ENCODE measurements at regions of chr11 and their contacts with region 1.

Region 1: DNA sequence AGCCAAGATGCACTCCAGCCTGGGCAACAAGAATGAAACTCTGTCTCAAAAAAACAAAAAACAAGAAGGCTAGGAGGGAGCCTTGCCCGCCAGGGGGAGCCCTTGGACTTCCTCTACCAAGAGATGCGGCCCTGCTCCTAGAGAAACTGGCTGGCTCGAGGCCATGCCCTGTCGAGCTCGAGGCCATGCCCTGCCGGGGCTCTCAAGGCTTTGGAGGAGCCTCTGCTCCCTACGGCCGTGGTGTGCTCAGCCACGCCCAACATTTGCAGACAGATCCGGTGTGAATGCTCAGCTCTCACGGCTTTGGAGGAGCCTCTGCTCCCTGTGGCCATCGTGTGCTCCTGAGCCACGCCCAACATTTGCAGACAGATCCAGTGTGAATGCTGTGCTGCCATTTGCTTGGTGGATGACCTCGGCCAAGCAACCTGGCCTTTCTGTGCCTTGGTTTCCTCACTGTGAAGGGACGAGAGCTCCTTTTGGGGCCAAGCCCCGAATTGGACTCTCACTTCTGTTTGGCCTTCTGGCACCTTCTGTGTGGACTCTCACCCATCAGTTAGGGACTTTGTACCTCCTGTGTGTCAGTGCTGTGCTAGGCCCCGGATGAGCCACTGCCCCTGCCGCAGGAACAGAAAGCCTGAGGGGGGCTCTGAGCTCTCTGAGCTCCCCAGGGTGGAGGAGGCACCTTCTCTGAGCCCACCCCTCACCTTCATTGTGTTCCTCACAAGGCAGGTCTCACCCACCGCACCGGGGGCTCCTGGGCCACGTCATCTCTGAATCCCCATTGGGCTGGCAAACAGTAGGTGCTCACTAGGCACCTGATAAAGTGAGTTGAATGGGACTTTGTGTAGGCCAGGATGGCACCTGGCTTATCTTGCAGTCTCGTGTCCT is 14.1 kb downstream of the C11orf24 start:
- DNase-seq: peak; percentile 97 to 99 (median 98)
- ATAC-seq: peak; percentile 85
- H3K4me3 ChIP-seq: no peak overlapping the region
- H3K27ac ChIP-seq: no peak overlapping the region
- H3K4me1 ChIP-seq: no peaks in the 10 kb centered on the region
- H3K27me3 ChIP-seq: no peaks in the 10 kb centered on the region

Region 2: GRCh38 chr11:68297812-68298658 is 40.3 kb after region 1 on chr11:
- intact Hi-C with region 1: loop called (anchors 2 to 5 kb)
- DNase-seq: peak; percentile 80 to 93 (median 92)
- ATAC-seq: peak; percentile 95 to 97
- H3K4me3 ChIP-seq: no peak overlapping the region
- H3K27ac ChIP-seq: no peak overlapping the region
- H3K4me1 ChIP-seq: no peaks in the 10 kb centered on the region
- H3K27me3 ChIP-seq: no peaks in the 10 kb centered on the region

Region 3: GRCh38 chr11:68383976-68384501 is 126.3 kb after region 1 on chr11:
- intact Hi-C with region 1: loop called in 3 of 4 experiments (anchors 5 kb)
- DNase-seq: peak; percentile 70 to 89 (median 88)
- ATAC-seq: no peak
- H3K4me3 ChIP-seq: no peak overlapping the region
- H3K27ac ChIP-seq: no peak overlapping the region
- H3K4me1 ChIP-seq: peaks cover 17% of the 10 kb centered on the region
- H3K27me3 ChIP-seq: no peaks in the 10 kb centered on the region

Region 4: GRCh38 chr11:68447015-68447801 is 189.5 kb after region 1 on chr11:
- intact Hi-C with region 1: loop called (anchors 2 to 10 kb)
- DNase-seq: peak; percentile 80 to 92 (median 91)
- ATAC-seq: peak; percentile 88 to 89
- H3K4me3 ChIP-seq: no peak overlapping the region
- H3K27ac ChIP-seq: no peak overlapping the region
- H3K4me1 ChIP-seq: no peaks in the 10 kb centered on the region
- H3K27me3 ChIP-seq: no peaks in the 10 kb centered on the region

Measured in right cardiac atrium (tissue), 5 donors.